SK-N-SH (cell line): ENCODE measurements at regions of chr2 and their contacts with region 1.

Region 1: DNA sequence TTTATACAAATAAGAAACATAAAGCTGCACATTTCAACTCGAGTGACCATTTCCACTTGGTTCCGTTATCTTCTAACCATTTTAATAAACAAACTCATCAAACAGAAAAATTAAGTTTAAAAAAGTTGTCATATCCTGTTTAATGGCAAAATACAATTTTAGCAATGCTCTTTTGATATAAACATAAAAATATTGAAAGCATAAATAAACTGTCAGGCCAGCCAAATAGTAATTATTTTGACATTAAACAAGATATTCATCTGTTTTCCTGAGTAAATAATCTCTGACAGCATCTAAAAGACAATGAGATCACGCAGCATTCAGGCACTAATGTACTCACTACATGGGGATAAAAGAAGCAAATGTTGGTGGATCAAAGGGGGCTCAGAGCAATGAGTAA is 145.3 kb upstream of the ATP5MC3 start:
- DNase-seq: no peak
- H3K4me3 ChIP-seq: no peak overlapping the region
- H3K27ac ChIP-seq: no peak overlapping the region
- H3K4me1 ChIP-seq: no peaks in the 10 kb centered on the region
- H3K27me3 ChIP-seq: no peaks in the 10 kb centered on the region
- CTCF ChIP-seq: no peak
- EP300 ChIP-seq: no peak
- RAD21 ChIP-seq: no peak

Region 2: DNA sequence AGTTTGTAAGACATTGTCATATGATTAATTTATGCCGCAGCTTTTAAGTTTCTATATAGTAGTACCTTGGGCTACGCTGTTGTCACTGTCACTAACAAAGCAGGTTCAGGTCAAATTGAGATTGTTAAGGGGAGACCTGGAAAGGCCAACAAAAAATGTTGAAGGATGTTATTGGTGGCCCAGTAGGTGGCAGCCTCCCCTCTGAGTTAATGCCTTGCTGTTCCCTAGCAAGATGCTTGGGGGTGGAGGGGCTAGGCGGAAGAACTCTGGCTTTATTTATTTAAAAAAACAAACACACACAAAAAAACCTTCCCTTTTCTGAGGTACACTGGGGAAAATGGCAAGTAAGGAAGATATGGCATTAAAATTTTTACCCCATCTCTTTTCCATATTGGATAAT is 17.0 kb before region 1 on chr2:
- CTCF ChIA-PET with region 1: interaction called, 12 read pairs
- POLR2A ChIA-PET with region 1: no interaction called
- DNase-seq: peak; percentile 54
- H3K4me3 ChIP-seq: no peak overlapping the region; a peak in 1 of 4 replicates
- H3K27ac ChIP-seq: no peak overlapping the region
- H3K4me1 ChIP-seq: no peaks in the 10 kb centered on the region
- H3K27me3 ChIP-seq: no peaks in the 10 kb centered on the region; the same call in 1 of the 2 replicates
- CTCF ChIP-seq: peak; percentile 47
- EP300 ChIP-seq: no peak
- RAD21 ChIP-seq: peak; percentile 77

Region 3: GRCh38 chr2:175402571-175402970 is 75.8 kb after region 1 on chr2:
- CTCF ChIA-PET with region 1: no interaction called
- POLR2A ChIA-PET with region 1: no interaction called
- DNase-seq: no peak
- H3K4me3 ChIP-seq: no peak overlapping the region
- H3K27ac ChIP-seq: no peak overlapping the region
- H3K4me1 ChIP-seq: peaks cover 2 to 7% of the 10 kb centered on the region in 2 experiments; a peak in 2 of 4 replicates
- H3K27me3 ChIP-seq: no peaks in the 10 kb centered on the region
- CTCF ChIP-seq: no peak
- EP300 ChIP-seq: no peak
- RAD21 ChIP-seq: no peak